Dorsolateral prefrontal cortex (tissue), 120 donors: ENCODE measurements at regions of chr6 and their contacts with region 1.

Region 1: GRCh38 chr6:107489636-107490565 is at the start of gene SOBP:
- DNase-seq: peak; percentile 48 to 86 (median 70)
- H3K4me3 ChIP-seq: peak within 1 kb of the TSS; percentile 65 to 96 (median 84)
- H3K27ac ChIP-seq: peak within 1 kb of the TSS; percentile 71 to 98 (median 93)
- H3K27me3 ChIP-seq: no peaks in the 10 kb centered on the region
- CTCF ChIP-seq: peak in 20 of 56 donors; percentile 8 to 48 (median 16)
- total RNA-seq, gene SOBP: 39.8 to 78.2 (median 56.6) TPM

Region 2: GRCh38 chr6:107114213-107114905 is 375.5 kb before region 1 on chr6:
- intact Hi-C with region 1: loop called (anchors 1 to 10 kb)
- DNase-seq: peak; percentile 44 to 89 (median 74)
- H3K4me3 ChIP-seq: peak overlapping the region; percentile 39 to 87 (median 71)
- H3K27ac ChIP-seq: peak overlapping the region in 57 of 59 donors; percentile 28 to 91 (median 75)
- H3K27me3 ChIP-seq: no peaks in the 10 kb centered on the region
- CTCF ChIP-seq: peak; percentile 57 to 98 (median 86)

Region 3: GRCh38 chr6:107540465-107540857 is 50.6 kb after region 1 on chr6:
- intact Hi-C with region 1: loop called in 1 of 2 experiments (anchors 2 kb)
- DNase-seq: no peak
- H3K4me3 ChIP-seq: peak overlapping the region in 1 of 59 donors; percentile 1
- H3K27ac ChIP-seq: peak overlapping the region in 29 of 59 donors; percentile 1 to 67 (median 32)
- H3K27me3 ChIP-seq: no peaks in the 10 kb centered on the region
- CTCF ChIP-seq: no peak

Region 4: GRCh38 chr6:107600936-107601335 is 111.0 kb after region 1 on chr6:
- intact Hi-C with region 1: loop called in 1 of 2 experiments (anchors 2 kb)
- DNase-seq: no peak
- H3K4me3 ChIP-seq: no peak overlapping the region
- H3K27ac ChIP-seq: no peak overlapping the region
- H3K27me3 ChIP-seq: no peaks in the 10 kb centered on the region
- CTCF ChIP-seq: no peak

Region 5: DNA sequence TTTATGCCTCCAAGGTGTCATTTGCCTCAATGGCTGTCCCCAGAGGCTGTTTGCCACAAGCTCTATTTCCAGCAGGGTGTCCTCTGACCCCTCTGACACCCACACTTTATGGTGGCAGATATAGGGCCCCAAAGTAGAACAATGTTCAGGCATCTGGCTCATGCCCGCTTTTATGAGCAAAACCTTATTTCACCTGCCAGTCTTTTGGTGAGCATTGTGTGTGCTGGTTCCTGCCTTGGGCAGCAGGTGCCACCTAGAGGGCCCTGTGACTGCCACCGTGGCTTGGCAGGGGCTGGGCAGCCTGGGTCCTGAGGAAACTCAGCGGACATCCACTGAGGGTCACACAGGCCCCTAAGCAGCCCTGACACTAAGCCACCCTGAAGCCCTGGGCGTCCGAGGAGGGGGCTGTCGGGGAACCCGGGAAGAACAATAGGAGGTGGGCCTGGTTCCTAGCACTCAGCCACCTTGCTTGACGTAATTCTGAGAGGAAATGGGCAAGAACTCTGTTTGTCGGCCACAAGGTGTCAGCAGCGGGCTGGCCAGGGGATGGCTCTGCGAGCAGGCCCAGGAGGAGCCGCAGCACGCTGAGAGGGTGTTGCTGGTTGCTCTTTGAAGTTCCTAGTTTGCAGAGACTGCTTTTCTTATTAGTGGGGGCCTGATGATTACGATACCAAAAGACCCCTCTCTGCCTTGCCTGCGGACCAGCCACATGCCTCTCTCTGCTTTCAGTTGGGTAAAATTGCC is 185.3 kb after region 1 on chr6:
- intact Hi-C with region 1: loop called in 1 of 2 experiments (anchors 10 kb)
- DNase-seq: peak; percentile 64 to 88 (median 83)
- H3K4me3 ChIP-seq: peak overlapping the region in 28 of 59 donors; percentile 1 to 42 (median 28)
- H3K27ac ChIP-seq: peak overlapping the region in 4 of 59 donors; percentile 50 to 73 (median 56)
- H3K27me3 ChIP-seq: no peaks in the 10 kb centered on the region
- CTCF ChIP-seq: peak; percentile 72 to 96 (median 89)